Calu3 (cell line): ENCODE measurements at regions of chr3 and their contacts with region 1.

Region 1: GRCh38 chr3:8996681-8997121 is 33.4 kb upstream of the RAD18 start:
- DNase-seq: no peak
- H3K4me3 Mint-ChIP-seq: no peak overlapping the region
- H3K27ac Mint-ChIP-seq: no peak overlapping the region
- H3K4me1 Mint-ChIP-seq: no peaks in the 10 kb centered on the region
- H3K27me3 Mint-ChIP-seq: no peaks in the 10 kb centered on the region
- CTCF ChIP-seq: no peak

Region 2: GRCh38 chr3:9231006-9231405 is 234.3 kb after region 1 on chr3:
- CTCF ChIA-PET with region 1: no interaction called
- intact Hi-C with region 1: loop called (anchors 5 kb)
- DNase-seq: no peak
- H3K4me3 Mint-ChIP-seq: no peak overlapping the region
- H3K27ac Mint-ChIP-seq: no peak overlapping the region
- H3K4me1 Mint-ChIP-seq: no peaks in the 10 kb centered on the region
- H3K27me3 Mint-ChIP-seq: peaks cover 24% of the 10 kb centered on the region
- CTCF ChIP-seq: no peak